ENCODE measurements at regions of chr17 and their contacts with region 1.

Region 1: GRCh38 chr17:31858642-31859473 is at the start of gene COPRS:
- DNase-seq: peak; percentile 81
- ATAC-seq: peak; percentile 86
- H3K4me3 Mint-ChIP-seq: peak within 1 kb of the TSS; percentile 70
- H3K27ac Mint-ChIP-seq: peak within 1 kb of the TSS; percentile 39
- H3K4me1 Mint-ChIP-seq: peaks cover 19% of the 10 kb centered on the region
- H3K27me3 Mint-ChIP-seq: peaks cover 6% of the 10 kb centered on the region; the same call in 1 of the 2 replicates
- CTCF ChIP-seq: no peak
- total RNA-seq, gene COPRS: 37.5 to 41.2 TPM (median 39.1 TPM) in 3 replicates

Region 2: DNA sequence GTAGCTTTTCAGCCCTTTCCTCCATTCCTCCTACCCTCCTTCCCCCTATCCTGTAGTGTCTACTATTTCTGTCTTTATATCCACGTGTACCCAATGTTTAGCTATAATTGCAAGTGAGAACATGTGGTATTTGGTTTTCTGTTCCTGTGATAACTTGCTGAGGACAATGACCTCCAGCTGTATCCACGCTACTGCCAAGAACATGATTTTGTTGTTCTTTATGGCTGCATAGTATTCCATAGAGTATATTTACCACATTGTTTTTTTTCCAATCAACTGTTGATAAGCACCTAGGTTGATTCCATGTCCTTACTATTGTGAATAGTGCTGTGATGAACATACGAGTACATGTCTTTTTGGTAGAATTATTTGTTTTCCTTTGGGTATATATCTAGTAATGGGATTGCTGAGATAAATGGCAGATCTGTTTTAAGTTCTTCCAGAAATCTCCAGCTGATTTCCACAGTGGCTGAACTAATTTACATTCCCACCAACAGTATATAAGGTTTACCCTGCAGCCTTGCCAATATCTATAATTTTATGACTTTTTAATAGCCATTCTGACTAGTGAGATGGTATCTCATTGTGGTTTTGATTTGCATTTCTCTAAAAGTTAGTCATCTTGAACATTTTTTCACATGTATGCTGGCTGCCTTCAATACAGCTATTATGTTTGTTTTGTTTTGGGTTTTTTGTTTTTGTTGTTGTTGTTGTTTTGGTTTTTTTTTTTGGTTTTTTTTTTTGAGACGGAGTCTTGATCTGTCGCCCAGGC is 11.1 kb after region 1 on chr17:
- CTCF ChIA-PET with region 1: no interaction called
- POLR2A ChIA-PET with region 1: no interaction called
- DNase-seq: no peak
- ATAC-seq: no peak
- H3K4me3 Mint-ChIP-seq: no peak overlapping the region
- H3K27ac Mint-ChIP-seq: no peak overlapping the region
- H3K4me1 Mint-ChIP-seq: no peaks in the 10 kb centered on the region
- H3K27me3 Mint-ChIP-seq: no peaks in the 10 kb centered on the region
- CTCF ChIP-seq: no peak

Region 3: DNA sequence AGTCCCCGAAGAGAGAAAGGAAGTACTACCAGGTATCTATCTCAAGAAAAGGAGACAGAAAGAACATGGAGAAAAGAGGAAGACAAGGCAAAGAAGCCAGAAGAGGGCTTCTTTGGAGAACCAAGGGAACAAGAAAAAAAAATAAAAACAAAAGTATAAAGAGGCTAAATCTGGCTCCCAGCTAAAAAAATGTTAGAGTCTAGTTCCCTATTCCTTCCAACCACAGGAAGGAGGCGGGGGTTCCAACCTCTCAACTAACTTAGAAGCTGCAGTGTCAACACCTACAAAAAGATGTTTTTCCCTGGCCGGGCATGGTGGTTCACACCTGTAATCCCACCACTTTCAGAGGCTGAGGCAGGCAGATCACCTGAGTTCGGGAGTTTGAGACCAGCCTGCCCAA is 29.3 kb after region 1 on chr17:
- CTCF ChIA-PET with region 1: no interaction called
- POLR2A ChIA-PET with region 1: no interaction called
- DNase-seq: no peak
- ATAC-seq: no peak
- H3K4me3 Mint-ChIP-seq: no peak overlapping the region
- H3K27ac Mint-ChIP-seq: no peak overlapping the region
- H3K4me1 Mint-ChIP-seq: no peaks in the 10 kb centered on the region
- H3K27me3 Mint-ChIP-seq: no peaks in the 10 kb centered on the region
- CTCF ChIP-seq: no peak

Region 4: DNA sequence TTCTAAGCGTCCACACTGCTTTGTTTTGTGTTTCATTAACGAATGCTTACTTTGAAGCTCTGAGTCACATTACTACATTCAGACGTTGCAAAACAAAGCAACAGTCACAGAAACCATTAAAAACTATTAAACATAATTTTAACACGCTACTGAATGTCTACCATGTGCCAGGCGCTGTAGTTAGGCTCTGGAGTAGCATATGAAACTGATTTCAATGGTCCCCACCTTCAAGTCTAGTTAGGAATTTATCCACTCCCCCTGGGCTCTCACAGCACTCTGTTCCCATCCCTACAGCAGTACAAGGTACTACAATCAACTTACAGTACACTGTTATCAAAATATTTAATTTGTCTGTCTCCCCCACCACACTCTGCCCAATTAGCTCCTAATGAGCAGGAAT is 42.0 kb after region 1 on chr17:
- CTCF ChIA-PET with region 1: interaction called, 15 read pairs
- POLR2A ChIA-PET with region 1: no interaction called
- DNase-seq: no peak
- ATAC-seq: no peak
- H3K4me3 Mint-ChIP-seq: no peak overlapping the region
- H3K27ac Mint-ChIP-seq: no peak overlapping the region
- H3K4me1 Mint-ChIP-seq: peaks cover 2% of the 10 kb centered on the region; the same call in 1 of the 2 replicates
- H3K27me3 Mint-ChIP-seq: no peaks in the 10 kb centered on the region
- CTCF ChIP-seq: no peak

Measured in WTC11 (cell line).